OCI-LY7 (cell line): ENCODE measurements at regions of chr20 and their contacts with region 1.

Region 1: DNA sequence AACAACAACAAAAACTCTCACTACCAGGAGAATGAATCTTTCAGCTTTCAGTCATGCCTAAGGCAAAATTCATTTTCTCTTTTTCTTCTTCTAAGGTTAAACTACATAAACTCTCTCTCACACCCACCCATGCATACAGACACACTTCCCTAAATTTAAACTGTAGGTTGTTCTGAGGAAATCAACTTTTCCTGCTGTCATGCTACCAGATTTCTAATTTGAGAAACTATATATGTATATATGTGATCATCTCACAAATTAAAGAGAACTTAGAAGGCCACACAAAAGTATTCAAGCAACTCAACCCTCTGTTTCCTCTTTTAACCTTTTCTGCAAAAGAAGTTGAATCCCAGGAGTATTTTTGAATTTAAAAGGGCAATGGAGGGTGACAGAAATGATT is 532.5 kb downstream of the KIF16B start:
- DNase-seq: peak; percentile 74
- H3K4me3 ChIP-seq: peak overlapping the region; percentile 2
- H3K27ac ChIP-seq: peak overlapping the region; percentile 95
- H3K4me1 ChIP-seq: peaks cover 65% of the 10 kb centered on the region
- CTCF ChIP-seq: no peak

Region 2: DNA sequence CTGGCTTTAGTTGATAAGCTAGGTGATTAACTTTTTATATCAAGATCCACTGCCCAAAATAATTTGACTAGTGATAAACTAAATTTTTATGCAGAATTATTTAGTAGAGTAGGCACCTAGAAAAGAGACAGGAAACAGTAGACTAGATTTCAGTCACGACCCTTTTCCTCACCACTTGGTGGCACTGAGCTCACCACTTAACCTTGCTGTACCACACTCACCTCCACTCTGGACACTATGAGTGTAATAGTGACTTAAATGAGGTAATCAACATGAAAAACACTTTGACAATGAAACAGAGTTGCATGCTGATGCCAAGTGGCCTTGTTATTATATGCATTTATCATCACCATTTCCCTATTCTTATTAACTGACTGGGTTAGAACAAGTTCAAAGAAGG is 197.9 kb before region 1 on chr20:
- CTCF ChIA-PET with region 1: no interaction called
- POLR2A ChIA-PET with region 1: interaction called, 5 read pairs
- intact Hi-C with region 1: loop called (anchors 2 kb)
- DNase-seq: peak; percentile 52
- H3K4me3 ChIP-seq: no peak overlapping the region
- H3K27ac ChIP-seq: no peak overlapping the region
- H3K4me1 ChIP-seq: peaks cover 7% of the 10 kb centered on the region
- CTCF ChIP-seq: peak; percentile 76

Region 3: GRCh38 chr20:15986690-15987089 is 54.1 kb before region 1 on chr20:
- CTCF ChIA-PET with region 1: no interaction called
- POLR2A ChIA-PET with region 1: no interaction called
- intact Hi-C with region 1: loop called (anchors 5 kb)
- DNase-seq: no peak
- H3K4me3 ChIP-seq: no peak overlapping the region
- H3K27ac ChIP-seq: no peak overlapping the region
- H3K4me1 ChIP-seq: no peaks in the 10 kb centered on the region
- CTCF ChIP-seq: no peak

Region 4: GRCh38 chr20:16011056-16011455 is 29.7 kb before region 1 on chr20:
- CTCF ChIA-PET with region 1: no interaction called
- POLR2A ChIA-PET with region 1: no interaction called
- intact Hi-C with region 1: no loop called
- DNase-seq: no peak
- H3K4me3 ChIP-seq: no peak overlapping the region
- H3K27ac ChIP-seq: no peak overlapping the region
- H3K4me1 ChIP-seq: no peaks in the 10 kb centered on the region
- CTCF ChIP-seq: no peak

Region 5: DNA sequence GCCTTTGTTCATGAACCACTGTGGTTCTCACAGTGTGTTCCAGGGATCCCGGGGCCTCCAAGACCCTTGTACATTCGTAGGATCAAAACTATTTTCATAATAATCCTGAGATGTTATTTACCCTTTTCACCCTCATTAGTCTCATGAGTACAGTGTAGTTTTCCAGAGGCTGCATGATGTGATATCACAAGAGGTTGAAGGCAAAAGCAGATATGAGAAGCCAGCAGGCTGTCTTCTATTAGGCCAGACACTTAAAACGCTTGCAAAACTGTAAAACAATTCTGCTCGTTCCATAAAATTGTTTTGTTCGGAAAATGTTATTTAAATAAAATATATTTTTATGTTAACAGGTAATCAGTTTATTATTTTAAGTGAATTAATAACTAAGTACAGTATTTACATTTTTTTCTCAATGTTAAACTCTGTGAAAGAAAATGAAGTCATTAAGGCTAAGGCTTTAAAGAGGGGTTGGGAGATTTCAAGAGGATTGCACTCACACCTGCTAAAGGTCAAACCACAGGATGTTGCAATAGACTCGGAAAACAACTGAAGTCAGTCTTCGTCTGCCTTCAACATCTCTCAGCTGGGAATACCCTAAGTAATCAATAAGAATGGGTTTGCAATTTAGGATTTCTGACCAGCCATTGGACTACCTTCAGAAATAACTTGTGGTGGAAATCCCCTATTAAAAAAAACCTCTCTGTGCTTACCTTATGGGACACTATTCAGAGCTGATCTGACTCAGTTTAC is 58.3 kb after region 1 on chr20:
- CTCF ChIA-PET with region 1: no interaction called
- POLR2A ChIA-PET with region 1: interaction called, 4 read pairs
- intact Hi-C with region 1: loop called (anchors 2 kb)
- DNase-seq: no peak
- H3K4me3 ChIP-seq: no peak overlapping the region
- H3K27ac ChIP-seq: no peak overlapping the region
- H3K4me1 ChIP-seq: peaks cover 48% of the 10 kb centered on the region
- CTCF ChIP-seq: no peak

Region 6: DNA sequence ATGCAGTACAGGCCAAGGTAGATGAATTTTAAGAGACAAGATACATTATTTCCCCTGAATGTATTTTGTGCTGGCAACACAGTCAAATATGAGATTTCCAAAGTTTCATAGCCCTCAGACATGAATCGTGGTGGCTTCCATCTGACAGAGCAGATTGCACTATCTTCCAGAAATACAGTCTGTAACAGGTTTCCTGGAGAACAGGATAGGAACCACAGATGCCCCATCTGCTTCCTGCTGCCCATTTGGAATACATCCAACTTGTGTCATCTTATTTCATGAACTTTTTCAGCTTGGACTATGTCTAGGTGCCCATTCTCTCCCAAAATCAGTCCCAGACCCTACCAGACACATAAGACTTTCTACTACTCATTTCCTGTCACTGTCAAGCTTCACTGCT is 106.5 kb after region 1 on chr20:
- CTCF ChIA-PET with region 1: no interaction called
- POLR2A ChIA-PET with region 1: no interaction called
- intact Hi-C with region 1: no loop called
- DNase-seq: no peak
- H3K4me3 ChIP-seq: no peak overlapping the region
- H3K27ac ChIP-seq: no peak overlapping the region
- H3K4me1 ChIP-seq: no peaks in the 10 kb centered on the region
- CTCF ChIP-seq: no peak

Region 7: GRCh38 chr20:16476032-16476431 is 435.3 kb after region 1 on chr20:
- CTCF ChIA-PET with region 1: no interaction called
- POLR2A ChIA-PET with region 1: no interaction called
- intact Hi-C with region 1: loop called (anchors 10 kb)
- DNase-seq: peak; percentile 61
- H3K4me3 ChIP-seq: no peak overlapping the region
- H3K27ac ChIP-seq: no peak overlapping the region
- H3K4me1 ChIP-seq: peaks cover 4% of the 10 kb centered on the region
- CTCF ChIP-seq: peak; percentile 90

Region 8: GRCh38 chr20:16493486-16493885 is 452.7 kb after region 1 on chr20:
- CTCF ChIA-PET with region 1: no interaction called
- POLR2A ChIA-PET with region 1: no interaction called
- intact Hi-C with region 1: no loop called
- DNase-seq: no peak
- H3K4me3 ChIP-seq: no peak overlapping the region
- H3K27ac ChIP-seq: no peak overlapping the region
- H3K4me1 ChIP-seq: no peaks in the 10 kb centered on the region
- CTCF ChIP-seq: no peak